Endothelial cell of umbilical vein (primary cell): ENCODE measurements at regions of chr9 and their contacts with region 1.

Region 1: GRCh38 chr9:136991993-136992818 is at the start of gene PAXX:
- DNase-seq: peak; percentile 80
- H3K4me3 ChIP-seq: peak within 1 kb of the TSS; percentile 47 to 56 (median 54)
- H3K27ac ChIP-seq: peak within 1 kb of the TSS; percentile 25
- H3K4me1 ChIP-seq: peaks cover 18% of the 10 kb centered on the region
- H3K27me3 ChIP-seq: no peaks in the 10 kb centered on the region
- CTCF ChIP-seq: no peak
- POLR2A ChIP-seq: no peak
- total RNA-seq, gene PAXX: 35.0 and 38.7 TPM in 2 replicates

Region 2: DNA sequence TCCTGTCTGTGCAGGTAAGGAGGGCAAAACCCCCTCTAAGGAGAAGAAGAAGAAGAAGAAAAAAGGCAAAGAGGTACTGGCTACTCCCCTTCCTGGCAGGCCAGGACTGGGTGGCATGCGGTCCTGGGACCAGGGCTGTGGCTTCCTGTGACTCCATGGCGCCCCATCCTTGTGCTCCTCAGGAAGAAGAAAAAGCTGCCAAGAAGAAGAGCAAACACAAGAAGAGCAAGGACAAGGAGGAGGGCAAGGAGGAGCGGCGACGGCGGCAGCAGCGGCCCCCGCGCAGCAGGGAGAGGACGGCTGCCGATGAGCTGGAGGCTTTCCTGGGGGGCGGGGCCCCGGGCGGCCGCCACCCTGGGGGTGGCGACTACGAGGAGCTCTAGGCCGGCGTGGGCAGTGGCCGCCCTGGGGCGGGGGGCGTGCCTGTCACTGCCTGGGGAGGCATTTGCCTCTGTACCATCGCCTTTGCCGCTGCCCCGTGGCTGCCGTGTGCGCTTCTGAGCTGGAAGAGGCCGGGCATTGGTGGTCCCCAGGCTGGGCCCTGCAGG is 152.0 kb before region 1 on chr9:
- CTCF ChIA-PET with region 1: interaction called, 10 read pairs
- POLR2A ChIA-PET with region 1: no interaction called
- dilution Hi-C with region 1: no loop called
- intact Hi-C with region 1: loop called (anchors 5 kb)
- DNase-seq: no peak
- H3K4me3 ChIP-seq: no peak overlapping the region
- H3K27ac ChIP-seq: no peak overlapping the region
- H3K4me1 ChIP-seq: peaks cover 3% of the 10 kb centered on the region
- H3K27me3 ChIP-seq: peaks cover 2 to 10% of the 10 kb centered on the region in 2 experiments
- CTCF ChIP-seq: no peak
- POLR2A ChIP-seq: no peak

Region 3: DNA sequence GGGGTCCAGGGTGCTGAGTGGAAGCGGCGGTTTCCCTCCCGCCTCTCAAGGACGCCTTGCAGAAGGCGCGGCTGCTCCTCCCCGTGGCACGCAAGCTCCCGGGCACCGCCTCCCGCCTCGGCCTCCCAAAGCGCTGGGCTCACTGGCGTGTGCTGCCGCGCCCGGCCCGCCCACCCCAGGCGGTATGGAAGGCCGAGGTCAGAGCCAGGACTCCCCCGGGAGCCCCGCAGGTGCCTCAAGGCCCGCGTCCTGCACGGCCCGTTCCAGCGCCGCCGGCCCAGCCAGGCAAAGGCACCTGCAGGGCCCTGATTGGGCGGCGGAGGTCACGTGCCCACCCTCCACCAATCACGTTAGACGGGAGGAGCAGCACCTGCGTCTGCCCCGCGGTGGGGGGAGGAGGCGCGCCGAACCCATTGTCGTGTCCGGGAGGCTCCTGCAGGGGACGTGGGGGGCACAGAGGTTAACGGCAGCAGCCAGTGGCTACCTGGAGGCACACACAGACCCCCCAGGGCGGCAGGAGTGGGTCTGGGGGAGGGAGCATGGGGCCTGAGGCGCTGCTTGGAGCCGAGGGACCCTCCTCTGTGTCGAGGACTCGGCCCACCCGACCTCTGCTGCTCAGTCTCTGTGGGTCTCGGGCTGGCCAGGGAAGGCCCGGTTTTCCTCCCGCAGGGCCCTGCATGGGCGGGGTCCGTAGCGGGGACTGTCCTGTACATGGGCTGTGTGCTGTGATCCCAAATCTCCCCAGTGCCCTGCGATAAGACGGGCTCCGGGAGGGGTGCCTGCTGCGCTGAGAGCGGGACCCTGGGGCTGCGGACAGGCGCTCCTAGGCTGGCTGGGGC is 42.2 kb before region 1 on chr9:
- CTCF ChIA-PET with region 1: interaction called, 27 read pairs
- POLR2A ChIA-PET with region 1: no interaction called
- dilution Hi-C with region 1: no loop called
- intact Hi-C with region 1: loop called (anchors 5 kb)
- DNase-seq: peak; percentile 93
- H3K4me3 ChIP-seq: peak overlapping the region; percentile 4 to 77 (median 9)
- H3K27ac ChIP-seq: no peak overlapping the region
- H3K4me1 ChIP-seq: peaks cover 5% of the 10 kb centered on the region
- H3K27me3 ChIP-seq: no peaks in the 10 kb centered on the region
- CTCF ChIP-seq: no peak
- POLR2A ChIP-seq: peak; percentile 57

Region 4: DNA sequence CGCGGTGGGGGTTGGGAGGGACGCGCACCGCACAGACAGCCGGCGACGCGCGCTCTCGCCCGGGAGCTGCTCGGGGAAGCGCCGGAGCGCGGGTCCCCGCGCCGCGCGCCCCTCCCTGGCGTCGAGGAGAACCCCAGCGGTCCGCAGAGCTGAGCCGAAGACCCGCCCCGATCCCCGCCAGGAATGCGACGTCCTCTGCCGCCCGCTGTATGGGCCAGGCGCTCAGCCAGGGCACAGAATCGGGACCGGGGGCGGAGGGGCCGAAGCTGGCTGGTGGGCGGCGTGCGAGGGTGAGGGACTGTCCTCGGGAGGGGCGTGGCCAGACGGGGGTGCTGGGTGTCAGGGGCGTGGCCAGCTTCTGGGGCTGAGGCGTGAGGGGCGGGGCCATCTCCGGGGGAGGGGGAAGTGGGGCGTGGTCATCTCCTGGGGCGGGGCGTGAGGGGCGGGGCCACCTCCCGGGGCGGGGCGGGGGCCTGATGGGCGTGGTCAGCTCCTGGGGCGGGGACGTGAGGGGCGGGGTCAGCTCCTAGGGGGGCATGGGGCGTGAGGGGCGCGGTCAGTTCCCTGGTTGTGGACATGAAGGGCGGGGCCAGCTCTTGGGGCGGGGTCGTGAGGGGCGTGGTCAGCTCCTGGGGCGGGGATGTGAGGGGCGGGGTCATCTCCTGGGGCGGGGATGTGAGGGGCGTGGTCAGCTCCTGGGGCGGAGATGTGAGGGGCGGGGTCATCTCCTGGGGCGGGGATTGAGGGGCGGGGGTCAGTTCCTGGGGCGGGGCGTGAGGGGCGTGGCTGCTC is 13.9 kb before region 1 on chr9:
- CTCF ChIA-PET with region 1: interaction called, 6 read pairs
- POLR2A ChIA-PET with region 1: interaction called, 3 read pairs
- dilution Hi-C with region 1: no loop called
- intact Hi-C with region 1: loop called (anchors 1 kb)
- DNase-seq: peak; percentile 39
- H3K4me3 ChIP-seq: peak overlapping the region in 1 of 3 experiments; percentile 32
- H3K27ac ChIP-seq: no peak overlapping the region
- H3K4me1 ChIP-seq: peaks cover 4% of the 10 kb centered on the region
- H3K27me3 ChIP-seq: no peaks in the 10 kb centered on the region
- CTCF ChIP-seq: no peak
- POLR2A ChIP-seq: no peak